Left cardiac atrium (tissue), 4 donors: ENCODE measurements at regions of chr3 and their contacts with region 1.

Region 1: GRCh38 chr3:50611464-50612233 is at the start of gene CISH:
- DNase-seq: peak; percentile 97
- ATAC-seq: peak; percentile 80 to 86
- total RNA-seq, gene CISH: 10.0 to 41.9 TPM

Region 2: DNA sequence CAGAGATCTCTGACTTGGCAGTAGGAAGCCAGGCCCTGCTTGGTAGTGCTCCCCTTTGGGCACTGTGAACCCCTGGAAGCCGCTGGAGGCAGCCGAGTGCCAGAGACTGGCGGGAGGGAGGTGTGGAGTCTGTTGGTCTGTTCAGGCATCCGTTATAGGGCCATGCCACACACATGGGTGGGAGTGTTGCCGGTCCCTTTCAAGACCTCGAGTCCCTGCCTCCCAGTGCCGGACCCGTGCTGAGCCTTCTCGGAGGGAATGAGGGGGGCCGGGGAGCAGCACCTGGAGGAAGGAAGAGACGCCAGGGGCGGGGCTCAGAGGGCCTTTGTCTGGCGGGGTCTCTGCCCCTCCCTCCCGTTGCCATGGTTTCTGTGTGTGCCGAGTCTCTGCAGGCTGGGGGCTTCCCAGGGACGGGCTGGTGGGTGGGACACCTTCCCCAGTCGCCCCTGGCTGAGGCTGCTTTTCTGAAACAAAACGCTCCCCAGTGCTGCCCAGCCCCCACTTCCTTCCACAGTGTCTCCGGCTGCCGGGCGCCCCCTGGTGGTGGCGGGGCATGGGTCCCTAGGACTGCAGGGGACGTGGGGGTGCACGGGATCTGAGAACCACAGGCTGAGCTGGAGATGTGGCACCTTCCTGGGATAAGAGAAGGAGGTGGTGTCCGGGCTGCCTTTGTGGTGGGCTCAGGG is 365.7 kb before region 1 on chr3:
- intact Hi-C with region 1: no loop called
- DNase-seq: peak; percentile 93
- ATAC-seq: peak; percentile 78 to 85

Region 3: GRCh38 chr3:50347194-50347918 is 264.3 kb before region 1 on chr3:
- intact Hi-C with region 1: loop called in 1 of 2 experiments (anchors 5 kb)
- DNase-seq: peak; percentile 68
- ATAC-seq: no peak

Region 4: DNA sequence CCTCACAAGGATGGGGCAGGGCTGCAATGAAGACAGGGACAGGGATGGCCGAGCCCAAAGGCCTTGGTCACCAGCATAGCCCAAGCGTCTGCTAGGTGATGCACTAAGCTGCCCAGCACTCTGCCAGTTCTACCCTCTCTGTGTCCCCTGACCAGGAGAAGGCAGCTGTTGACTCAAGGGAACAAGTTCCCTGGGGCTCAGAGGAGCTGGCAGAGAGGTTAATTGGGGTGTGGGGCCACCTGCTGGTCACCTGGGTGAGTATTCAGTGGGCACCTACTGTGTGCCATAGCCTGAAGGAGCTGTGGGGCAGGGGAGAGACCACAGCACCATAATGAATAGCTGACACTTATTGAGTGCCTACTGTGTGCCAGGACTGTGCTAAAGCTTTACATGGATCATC is 41.1 kb after region 1 on chr3:
- intact Hi-C with region 1: loop called in 1 of 2 experiments (anchors 2 kb)
- DNase-seq: no peak
- ATAC-seq: peak in 1 of 2 donors; percentile 22

Region 5: DNA sequence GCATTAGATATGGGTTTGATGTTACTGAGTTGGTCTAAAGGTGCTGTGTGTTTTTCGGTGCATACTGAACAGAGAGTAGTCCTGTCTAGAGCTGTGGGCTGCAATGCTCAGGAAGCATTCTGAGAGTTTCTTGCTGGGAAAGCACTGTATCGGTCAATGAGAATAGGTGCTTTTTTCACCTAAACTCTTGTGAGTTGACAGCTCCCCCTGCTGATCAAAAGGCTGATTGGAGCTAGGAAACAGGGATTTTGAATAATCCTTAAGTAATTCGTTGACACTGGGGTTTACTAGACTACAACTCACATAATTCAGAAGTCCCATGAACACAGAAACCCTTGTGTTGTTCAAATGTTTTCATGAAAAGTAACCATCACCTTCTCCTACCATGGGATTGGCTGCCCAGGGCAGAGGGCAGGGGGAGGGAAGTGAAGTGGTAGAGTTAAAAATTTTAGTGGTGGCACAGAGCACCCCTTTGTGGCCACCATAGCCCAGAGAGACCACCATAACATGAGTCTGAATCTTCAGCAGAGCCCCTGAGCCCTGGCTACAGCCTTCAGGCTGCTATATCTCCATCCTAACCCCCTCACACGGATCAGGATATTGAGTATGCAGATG is 760.4 kb after region 1 on chr3:
- intact Hi-C with region 1: loop called in 1 of 2 experiments (anchors 5 kb)
- DNase-seq: no peak
- ATAC-seq: peak in 1 of 2 donors; percentile 65

Region 6: GRCh38 chr3:51434746-51435327 is 823.2 kb after region 1 on chr3:
- intact Hi-C with region 1: loop called in 1 of 2 experiments (anchors 5 kb)
- DNase-seq: no peak
- ATAC-seq: peak; percentile 82